GM12878 (cell line): ENCODE measurements at regions of chr4 and their contacts with region 1.

Region 1: GRCh38 chr4:180557348-180557747 is 1685.9 kb upstream of the TENM3 start:
- DNase-seq: no peak
- ATAC-seq: peak; percentile 68
- H3K4me3 ChIP-seq: no peak overlapping the region
- H3K27ac ChIP-seq: no peak overlapping the region
- H3K4me1 ChIP-seq: no peaks in the 10 kb centered on the region
- H3K27me3 ChIP-seq: no peaks in the 10 kb centered on the region
- CTCF ChIP-seq: peak; percentile 35 to 47 (median 38); a peak in 3 of 6 replicates
- EP300 ChIP-seq: no peak
- POLR2A ChIP-seq: no peak
- RAD21 ChIP-seq: no peak

Region 2: DNA sequence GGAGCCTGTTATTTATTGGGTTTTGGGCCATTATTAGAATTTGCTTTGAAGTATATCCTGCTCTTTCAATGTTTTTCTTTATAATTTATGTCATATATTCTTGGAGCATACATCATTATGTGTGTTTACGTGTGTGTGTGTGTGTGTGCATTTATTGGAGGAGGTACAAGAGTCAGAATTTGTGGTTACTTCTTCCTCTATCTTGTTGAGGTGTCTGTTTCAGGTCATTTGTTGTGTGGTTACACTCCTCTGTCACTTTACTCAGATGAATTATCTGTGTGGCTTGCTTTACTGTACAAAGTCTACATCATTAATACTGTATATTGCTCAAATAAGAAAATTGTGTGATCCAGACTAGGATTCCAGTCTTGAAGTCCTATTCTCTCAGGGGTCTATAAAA is 271.6 kb before region 1 on chr4:
- CTCF ChIA-PET with region 1: no interaction called
- POLR2A ChIA-PET with region 1: no interaction called
- RAD21 ChIA-PET with region 1: no interaction called
- SMC1A ChIA-PET with region 1: no interaction called
- in situ Hi-C with region 1: no loop called
- intact Hi-C with region 1: no loop called
- DNase-seq: peak; percentile 34
- ATAC-seq: peak; percentile 77
- H3K4me3 ChIP-seq: no peak overlapping the region
- H3K27ac ChIP-seq: no peak overlapping the region
- H3K4me1 ChIP-seq: no peaks in the 10 kb centered on the region
- H3K27me3 ChIP-seq: no peaks in the 10 kb centered on the region
- CTCF ChIP-seq: no peak
- EP300 ChIP-seq: no peak
- POLR2A ChIP-seq: no peak
- RAD21 ChIP-seq: no peak

Region 3: DNA sequence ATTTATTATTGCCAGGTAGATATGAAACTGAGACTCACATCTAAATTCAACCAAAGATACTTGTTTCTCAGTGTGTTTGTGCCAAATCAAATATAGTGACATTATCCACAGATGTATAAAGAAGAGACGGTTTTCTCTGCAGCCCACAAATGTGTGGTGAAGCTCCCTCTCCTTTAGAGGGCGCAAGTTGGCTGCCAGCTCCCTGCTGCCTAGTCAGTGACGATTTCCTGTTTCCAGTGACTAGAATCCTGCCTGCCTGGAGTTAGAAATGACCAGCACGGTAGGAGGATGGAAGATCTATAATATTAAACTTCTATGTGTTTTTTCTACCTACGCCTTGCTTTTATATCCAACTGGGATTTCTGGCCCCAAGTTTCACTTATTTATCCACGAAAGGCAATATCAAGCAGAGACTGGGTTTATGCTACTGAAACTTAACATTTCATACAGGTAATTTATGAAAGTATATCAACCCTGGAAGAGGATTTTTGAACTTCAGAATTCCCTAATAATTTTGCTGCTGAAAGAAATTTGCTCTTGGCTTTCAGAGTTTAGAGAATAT is 107.9 kb before region 1 on chr4:
- CTCF ChIA-PET with region 1: interaction called, 9 read pairs
- POLR2A ChIA-PET with region 1: no interaction called
- RAD21 ChIA-PET with region 1: interaction called, 5 read pairs
- SMC1A ChIA-PET with region 1: no interaction called
- in situ Hi-C with region 1: no loop called
- intact Hi-C with region 1: loop called (anchors 5 kb)
- DNase-seq: no peak
- ATAC-seq: peak; percentile 95
- H3K4me3 ChIP-seq: no peak overlapping the region
- H3K27ac ChIP-seq: no peak overlapping the region
- H3K4me1 ChIP-seq: no peaks in the 10 kb centered on the region
- H3K27me3 ChIP-seq: no peaks in the 10 kb centered on the region
- CTCF ChIP-seq: peak; percentile 44 to 65 (median 61); a peak in 5 of 6 replicates
- EP300 ChIP-seq: no peak
- POLR2A ChIP-seq: no peak
- RAD21 ChIP-seq: peak; percentile 55